ENCODE measurements at regions of chr18 and their contacts with region 1.

Region 1: DNA sequence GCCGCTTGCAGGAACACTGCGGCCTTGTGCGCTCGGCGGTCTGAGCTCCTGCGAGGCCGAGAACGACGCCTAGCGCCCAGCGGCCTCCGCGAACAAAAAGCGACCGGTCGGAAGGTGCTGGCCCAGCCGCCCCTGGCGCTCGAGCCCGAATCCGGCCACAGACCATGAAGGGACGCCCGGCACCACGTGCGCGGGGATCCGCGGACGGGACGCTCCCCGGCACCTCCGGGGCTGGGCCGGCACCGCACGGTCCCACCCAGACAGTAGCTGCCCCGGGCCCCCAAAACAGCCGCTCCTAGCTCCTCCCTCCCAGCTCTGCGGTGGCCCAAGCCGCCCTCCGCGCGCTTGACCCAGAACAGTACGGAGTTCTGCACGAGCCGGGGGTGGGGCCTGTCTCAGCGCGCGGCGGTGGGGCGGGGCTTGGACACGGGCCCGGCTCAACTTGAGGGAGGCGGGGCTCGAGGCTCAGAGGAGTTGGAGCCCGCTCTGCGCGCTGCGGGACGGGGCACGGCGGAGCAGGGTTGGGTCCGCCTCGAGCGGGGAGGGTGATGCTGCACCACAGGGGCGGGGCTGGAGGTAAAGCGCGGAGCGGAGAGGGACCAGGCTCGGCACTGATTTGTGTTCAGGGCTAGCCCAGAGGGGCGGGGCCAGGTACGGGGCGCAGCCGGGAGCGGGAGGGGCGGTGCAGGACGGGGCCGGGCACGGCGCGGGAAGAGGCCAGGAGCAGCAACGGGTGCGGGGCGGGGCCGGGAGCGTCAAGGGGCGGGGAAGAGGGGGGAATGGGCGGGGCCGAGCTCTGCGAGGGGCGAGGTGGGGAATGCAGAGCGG is 538 bp upstream of the IMPA2 start:
- DNase-seq: peak; percentile 98 to 99
- ATAC-seq: peak; percentile 97
- H3K4me3 ChIP-seq: peak overlapping the region; percentile 75 to 96
- H3K27ac ChIP-seq: peak overlapping the region; percentile 85 to 87
- H3K4me1 ChIP-seq: no peaks in the 10 kb centered on the region
- H3K27me3 ChIP-seq: peaks cover 0 to 1% of the 10 kb centered on the region in 2 donors

Region 2: GRCh38 chr18:11947214-11948191 is 33.3 kb before region 1 on chr18:
- intact Hi-C with region 1: loop called (anchors 1 to 5 kb)
- DNase-seq: peak; percentile 95 to 96
- ATAC-seq: peak; percentile 98
- H3K4me3 ChIP-seq: peak overlapping the region; percentile 13 to 29
- H3K27ac ChIP-seq: peak overlapping the region; percentile 20 to 93
- H3K4me1 ChIP-seq: no peaks in the 10 kb centered on the region
- H3K27me3 ChIP-seq: no peaks in the 10 kb centered on the region

Region 3: GRCh38 chr18:12038639-12039417 is 58.1 kb after region 1 on chr18:
- intact Hi-C with region 1: loop called in 1 of 2 experiments (anchors 10 kb)
- DNase-seq: peak; percentile 87 to 94
- ATAC-seq: peak; percentile 98
- H3K4me3 ChIP-seq: peak overlapping the region; percentile 2 to 58
- H3K27ac ChIP-seq: no peak overlapping the region
- H3K4me1 ChIP-seq: no peaks in the 10 kb centered on the region
- H3K27me3 ChIP-seq: no peaks in the 10 kb centered on the region

Measured in aorta (tissue), 5 donors.